ENCODE measurements at regions of chr11 and their contacts with region 1.

Region 1: GRCh38 chr11:32583459-32584271 is at the start of gene EIF3M:
- DNase-seq: peak; percentile 96 to 98
- ATAC-seq: peak; percentile 100
- H3K4me3 ChIP-seq: peak within 1 kb of the TSS; percentile 77
- H3K27ac ChIP-seq: peak within 1 kb of the TSS; percentile 89
- H3K4me1 ChIP-seq: peaks cover 26% of the 10 kb centered on the region
- H3K27me3 ChIP-seq: no peaks in the 10 kb centered on the region
- CTCF ChIP-seq: no peak
- total RNA-seq, gene EIF3M: 135 to 197 (median 180) TPM

Region 2: GRCh38 chr11:32435511-32435941 is 148.1 kb before region 1 on chr11 and contains the start of gene WT1:
- intact Hi-C with region 1: no loop called
- DNase-seq: peak in 1 of 2 donors; percentile 48
- ATAC-seq: peak in 1 of 4 donors; percentile 44
- H3K4me3 ChIP-seq: peak within 1 kb of the TSS; percentile 39
- H3K27ac ChIP-seq: no peak within 1 kb of the TSS
- H3K4me1 ChIP-seq: no peaks in the 10 kb centered on the region
- H3K27me3 ChIP-seq: peaks cover 4 to 97% (median 59%) of the 10 kb centered on the region in 3 donors
- CTCF ChIP-seq: no peak
- total RNA-seq, gene WT1: 0.17 to 1.5 (median 0.31) TPM

Region 3: DNA sequence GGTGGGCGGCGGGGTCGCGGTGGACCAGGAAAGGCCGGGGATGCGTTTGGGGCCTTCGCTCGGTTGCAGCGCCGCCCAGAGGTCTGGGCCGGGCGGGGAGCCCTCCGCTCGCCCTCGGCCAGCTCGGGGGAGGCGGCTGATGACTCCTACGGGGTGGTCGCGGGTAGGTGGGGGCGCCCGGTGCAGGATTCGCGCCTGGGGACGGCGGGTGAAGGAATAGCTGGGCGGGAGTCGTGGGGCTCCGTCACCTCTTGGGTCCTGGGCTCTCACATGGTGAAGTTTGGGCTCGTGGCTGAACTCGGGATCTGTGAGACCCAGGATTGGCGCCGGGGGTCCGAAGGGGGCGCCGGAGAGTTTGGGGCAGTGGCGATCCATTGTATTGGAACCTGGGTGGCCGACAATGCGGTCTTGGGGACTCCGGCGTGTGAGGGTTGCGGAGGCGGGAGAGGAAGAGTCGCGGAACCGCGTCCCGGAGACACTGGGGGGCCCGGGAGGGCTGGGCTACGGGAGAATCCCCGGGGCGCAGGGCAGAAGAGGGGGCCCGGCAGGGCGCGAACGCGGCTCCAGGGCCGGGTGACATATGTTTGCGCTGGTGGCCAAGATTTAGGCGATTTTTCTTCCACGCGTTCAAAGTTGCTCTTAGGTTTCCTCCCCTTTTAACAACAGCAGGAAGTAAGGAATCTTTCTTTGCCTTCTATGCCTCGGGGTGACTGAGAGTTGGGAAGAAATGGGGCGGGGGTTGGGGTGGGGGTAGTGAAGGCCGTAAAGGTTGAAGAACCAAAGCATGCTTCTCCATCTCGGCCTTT is 309.9 kb after region 1 on chr11:
- intact Hi-C with region 1: loop called in 1 of 2 experiments (anchors 10 kb)
- DNase-seq: peak; percentile 50 to 75
- ATAC-seq: peak; percentile 69 to 84 (median 78)
- H3K4me3 ChIP-seq: peak overlapping the region; percentile 78
- H3K27ac ChIP-seq: peak overlapping the region; percentile 90
- H3K4me1 ChIP-seq: peaks cover 13% of the 10 kb centered on the region
- H3K27me3 ChIP-seq: no peaks in the 10 kb centered on the region
- CTCF ChIP-seq: peak; percentile 51

Region 4: GRCh38 chr11:33893711-33894397 is 1310.2 kb after region 1 on chr11:
- intact Hi-C with region 1: loop called in 1 of 2 experiments (anchors 5 kb)
- DNase-seq: no peak
- ATAC-seq: peak in 2 of 4 donors; percentile 28 to 44
- H3K4me3 ChIP-seq: no peak overlapping the region
- H3K27ac ChIP-seq: peak overlapping the region; percentile 75
- H3K4me1 ChIP-seq: peaks cover 8% of the 10 kb centered on the region
- H3K27me3 ChIP-seq: no peaks in the 10 kb centered on the region
- CTCF ChIP-seq: no peak

Measured in psoas muscle (tissue), 8 donors.